ENCODE measurements at regions of chr6 and their contacts with region 1.

Region 1: GRCh38 chr6:107459283-107460082 is at the start of gene PDSS2:
- DNase-seq: peak; percentile 95
- H3K4me3 Mint-ChIP-seq: peak within 1 kb of the TSS; percentile 93
- H3K27ac Mint-ChIP-seq: peak within 1 kb of the TSS; percentile 91
- H3K4me1 Mint-ChIP-seq: peaks cover 16% of the 10 kb centered on the region
- H3K27me3 Mint-ChIP-seq: no peaks in the 10 kb centered on the region
- total RNA-seq, gene PDSS2: 11.8 and 14.5 TPM in 2 replicates

Region 2: GRCh38 chr6:106325336-106326178 is 1133.9 kb before region 1 on chr6 and contains the start of gene ATG5:
- intact Hi-C with region 1: loop called (anchors 1 kb)
- DNase-seq: peak; percentile 100
- H3K4me3 Mint-ChIP-seq: peak within 1 kb of the TSS; percentile 100
- H3K27ac Mint-ChIP-seq: peak within 1 kb of the TSS; percentile 98
- H3K4me1 Mint-ChIP-seq: peaks cover 35% of the 10 kb centered on the region
- H3K27me3 Mint-ChIP-seq: peaks cover 22% of the 10 kb centered on the region
- total RNA-seq, gene ATG5: 36.0 and 36.7 TPM in 2 replicates

Region 3: DNA sequence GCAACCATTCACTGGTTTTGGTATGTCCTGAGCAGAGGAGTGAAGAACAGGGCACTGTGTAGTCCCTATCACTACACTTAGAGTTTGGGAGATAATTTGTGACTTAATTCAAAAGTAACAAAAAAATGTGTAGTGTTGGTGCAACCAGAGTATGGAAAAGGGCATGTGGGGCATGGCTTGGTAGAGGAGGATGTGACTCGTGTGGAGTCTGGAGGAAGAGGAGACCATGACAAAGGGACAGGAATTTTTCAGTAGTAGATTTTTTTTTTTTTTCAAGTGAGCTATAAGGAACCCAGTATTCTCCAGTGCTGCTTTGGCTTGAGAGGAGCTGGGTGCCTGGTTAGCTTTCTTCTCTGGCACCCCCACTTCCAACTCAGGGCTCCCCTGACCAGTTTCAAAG is 426.4 kb before region 1 on chr6:
- intact Hi-C with region 1: loop called (anchors 1 kb)
- DNase-seq: no peak
- H3K4me3 Mint-ChIP-seq: no peak overlapping the region
- H3K27ac Mint-ChIP-seq: peak overlapping the region; percentile 25
- H3K4me1 Mint-ChIP-seq: peaks cover 20% of the 10 kb centered on the region
- H3K27me3 Mint-ChIP-seq: no peaks in the 10 kb centered on the region

Region 4: DNA sequence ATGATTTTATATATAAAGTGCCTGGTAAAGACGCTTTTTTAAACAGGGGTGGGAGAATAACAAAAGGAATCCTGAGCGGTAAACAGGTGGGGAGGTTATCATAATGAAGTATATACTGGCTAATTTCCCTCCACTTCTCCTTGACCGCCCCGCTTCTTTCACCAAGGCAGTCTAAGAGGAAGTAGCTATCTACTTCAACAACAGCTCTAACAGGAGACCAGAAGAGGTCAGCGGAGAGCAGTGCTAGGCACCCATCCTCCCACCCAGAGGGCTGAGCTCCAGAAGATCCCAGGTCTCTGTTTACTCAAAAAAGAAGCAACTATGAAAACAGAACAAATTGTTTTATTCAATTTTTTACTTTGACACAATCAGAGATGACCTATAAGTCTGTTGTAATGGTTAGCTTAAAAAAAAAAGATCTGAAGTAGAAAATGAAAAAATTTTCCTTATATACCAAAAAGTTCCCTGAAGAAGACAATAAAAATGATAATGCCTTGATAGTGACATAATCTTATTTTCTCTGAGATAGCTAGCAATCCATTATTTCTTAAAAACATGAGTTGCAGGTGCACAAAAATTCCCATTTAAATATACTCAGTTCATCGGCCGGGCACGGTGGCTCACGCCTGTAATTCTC is 141.3 kb before region 1 on chr6:
- intact Hi-C with region 1: loop called (anchors 2 kb)
- DNase-seq: no peak
- H3K4me3 Mint-ChIP-seq: no peak overlapping the region
- H3K27ac Mint-ChIP-seq: no peak overlapping the region
- H3K4me1 Mint-ChIP-seq: peaks cover 14% of the 10 kb centered on the region
- H3K27me3 Mint-ChIP-seq: no peaks in the 10 kb centered on the region

Region 5: GRCh38 chr6:107489636-107490565 is 30.4 kb after region 1 on chr6 and contains the start of gene SOBP:
- intact Hi-C with region 1: loop called (anchors 1 kb)
- DNase-seq: peak; percentile 9
- H3K4me3 Mint-ChIP-seq: peak within 1 kb of the TSS; percentile 91
- H3K27ac Mint-ChIP-seq: peak within 1 kb of the TSS; percentile 36
- H3K4me1 Mint-ChIP-seq: peaks cover 28% of the 10 kb centered on the region
- H3K27me3 Mint-ChIP-seq: peaks cover 50% of the 10 kb centered on the region
- total RNA-seq, gene SOBP: 0.15 and 0.16 TPM in 2 replicates

Region 6: GRCh38 chr6:108074359-108075144 is 615.1 kb after region 1 on chr6 and contains the start of gene OSTM1:
- intact Hi-C with region 1: loop called (anchors 1 kb)
- DNase-seq: peak; percentile 92
- H3K4me3 Mint-ChIP-seq: peak within 1 kb of the TSS; percentile 85
- H3K27ac Mint-ChIP-seq: peak within 1 kb of the TSS; percentile 80
- H3K4me1 Mint-ChIP-seq: peaks cover 12% of the 10 kb centered on the region
- H3K27me3 Mint-ChIP-seq: peaks cover 25% of the 10 kb centered on the region
- total RNA-seq, gene OSTM1: 19.9 and 22.5 TPM in 2 replicates

Region 7: GRCh38 chr6:108914235-108915022 is 1454.9 kb after region 1 on chr6:
- intact Hi-C with region 1: no loop called
- DNase-seq: peak; percentile 12
- H3K4me3 Mint-ChIP-seq: no peak overlapping the region
- H3K27ac Mint-ChIP-seq: no peak overlapping the region
- H3K4me1 Mint-ChIP-seq: peaks cover 16% of the 10 kb centered on the region
- H3K27me3 Mint-ChIP-seq: peaks cover 31% of the 10 kb centered on the region